Cardiac septum (tissue), 1 donor: ENCODE measurements at regions of chr6 and their contacts with region 1.

Region 1: DNA sequence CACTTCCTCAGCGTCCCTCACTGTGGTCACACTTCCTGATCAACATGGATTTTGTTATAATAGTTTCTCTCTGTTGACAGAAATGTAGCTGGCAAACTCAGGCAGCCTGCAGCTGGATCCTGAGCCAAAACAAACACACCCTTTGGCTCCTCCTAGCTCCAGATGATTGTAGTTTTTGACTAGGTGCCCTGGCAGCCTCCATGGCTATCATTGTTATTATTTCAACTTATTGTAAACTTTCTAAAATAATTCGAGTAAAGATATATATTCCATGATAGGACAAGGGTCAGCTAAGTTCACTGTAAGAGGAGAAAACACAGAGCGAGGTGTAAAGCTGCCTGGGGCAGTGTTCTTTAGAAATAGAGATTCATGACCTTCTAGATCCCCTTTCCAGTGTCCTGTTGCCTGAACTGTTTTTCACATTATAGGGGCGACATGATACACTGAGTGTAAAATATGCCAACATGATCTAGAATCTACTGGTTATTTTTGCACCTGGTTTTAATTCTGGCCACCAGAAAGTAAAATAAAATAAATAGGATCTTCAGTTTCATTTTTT is 98.2 kb upstream of the HDGFL1 start:
- DNase-seq: no peak

Region 2: DNA sequence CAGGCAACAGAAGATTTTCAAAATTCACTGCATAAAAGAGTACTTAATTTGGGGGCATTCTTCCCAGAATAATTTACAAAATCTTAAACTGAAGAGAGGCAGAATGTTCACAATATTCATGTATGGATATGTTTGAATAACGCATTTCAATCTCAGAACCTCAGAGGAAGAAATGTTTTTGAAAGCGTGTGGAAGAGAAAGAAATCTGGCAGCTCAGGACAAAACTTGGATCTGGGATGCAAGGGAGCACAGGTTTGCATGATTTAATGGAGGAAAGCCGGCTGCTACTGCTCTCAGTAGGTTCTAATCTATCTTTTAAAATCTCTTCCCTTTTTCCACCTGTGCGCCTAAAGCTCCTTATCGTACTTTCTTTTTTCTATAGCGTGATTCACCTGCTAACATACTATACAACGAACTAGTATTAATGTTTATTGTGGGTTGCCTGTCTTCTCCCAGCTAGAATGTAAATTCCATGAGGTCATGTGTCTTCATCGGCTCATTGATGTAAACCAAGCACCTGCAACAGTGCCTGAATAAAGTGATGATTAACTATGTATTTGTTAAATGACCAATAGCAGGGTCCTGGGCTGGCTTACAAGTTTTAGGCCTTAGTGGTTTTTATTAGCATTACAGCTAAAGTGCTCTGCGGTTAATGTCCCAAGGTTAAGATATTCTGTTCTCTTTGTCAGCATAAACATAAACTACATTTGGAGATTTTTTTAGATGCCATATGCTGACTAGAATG is 189.7 kb before region 1 on chr6:
- intact Hi-C with region 1: no loop called
- DNase-seq: no peak

Region 3: DNA sequence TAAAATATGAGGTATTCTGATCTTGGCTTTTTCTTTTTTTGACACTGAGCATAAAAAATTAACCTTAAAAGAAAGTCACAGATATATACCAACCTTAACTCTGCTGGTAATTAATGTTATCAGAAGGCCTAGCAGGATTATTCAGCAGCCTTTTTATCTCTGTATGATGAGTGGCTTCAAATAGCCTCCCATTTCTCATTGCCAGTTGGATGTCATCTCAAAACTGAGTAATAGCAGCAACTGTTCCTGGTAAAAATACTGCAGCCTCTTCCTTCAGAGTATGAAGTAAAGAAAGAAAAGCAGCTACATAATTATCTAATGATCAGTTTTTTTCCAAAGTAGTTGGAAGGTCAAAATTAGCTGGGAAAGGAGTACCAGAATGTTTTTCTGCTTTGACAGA is 73.3 kb after region 1 on chr6:
- intact Hi-C with region 1: loop called (anchors 5 kb)
- DNase-seq: no peak

Region 4: GRCh38 chr6:22668307-22668706 is 197.1 kb after region 1 on chr6:
- intact Hi-C with region 1: loop called (anchors 2 kb)
- DNase-seq: no peak

Region 5: GRCh38 chr6:22970004-22970403 is 498.8 kb after region 1 on chr6:
- intact Hi-C with region 1: no loop called
- DNase-seq: no peak